ENCODE measurements at regions of chr1 and their contacts with region 1.

Region 1: DNA sequence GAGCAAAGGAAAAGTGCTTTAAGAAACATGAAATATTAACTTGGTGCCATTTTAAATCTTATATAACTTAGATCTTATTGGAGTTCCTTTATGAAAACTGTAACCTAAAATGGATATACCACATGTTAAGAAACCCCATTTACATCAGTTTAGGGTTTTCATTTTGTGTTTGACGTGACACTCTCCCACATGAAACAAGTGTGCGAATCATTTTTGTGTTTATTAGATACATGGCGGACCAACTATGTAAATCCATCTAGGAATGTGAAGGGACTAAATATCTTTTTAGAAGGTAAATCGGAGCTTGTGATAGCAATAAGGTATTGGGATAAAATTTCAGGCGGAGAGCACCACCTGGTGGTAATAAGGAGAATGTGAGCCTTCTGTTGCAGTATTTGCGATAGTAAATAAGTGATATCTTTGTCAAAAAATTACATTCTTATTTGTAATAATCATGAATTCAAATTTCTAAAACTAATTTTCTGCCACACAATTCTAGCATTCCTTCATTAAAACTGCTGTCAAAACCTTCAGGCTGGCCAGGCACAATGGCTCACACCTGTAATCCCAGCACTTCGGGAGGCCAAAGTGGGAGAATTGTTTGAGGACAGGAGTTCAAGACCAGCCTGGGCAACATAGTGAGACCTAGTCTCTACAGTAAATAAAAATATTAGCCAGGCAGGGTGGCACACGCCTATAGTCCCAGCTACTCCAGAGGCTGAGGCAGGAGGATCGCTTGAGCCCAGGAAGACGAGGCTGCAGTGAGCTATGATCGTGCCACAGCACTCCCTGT is 31.3 kb downstream of the SMAP2 start:
- DNase-seq: no peak
- ATAC-seq: peak; percentile 62

Region 2: DNA sequence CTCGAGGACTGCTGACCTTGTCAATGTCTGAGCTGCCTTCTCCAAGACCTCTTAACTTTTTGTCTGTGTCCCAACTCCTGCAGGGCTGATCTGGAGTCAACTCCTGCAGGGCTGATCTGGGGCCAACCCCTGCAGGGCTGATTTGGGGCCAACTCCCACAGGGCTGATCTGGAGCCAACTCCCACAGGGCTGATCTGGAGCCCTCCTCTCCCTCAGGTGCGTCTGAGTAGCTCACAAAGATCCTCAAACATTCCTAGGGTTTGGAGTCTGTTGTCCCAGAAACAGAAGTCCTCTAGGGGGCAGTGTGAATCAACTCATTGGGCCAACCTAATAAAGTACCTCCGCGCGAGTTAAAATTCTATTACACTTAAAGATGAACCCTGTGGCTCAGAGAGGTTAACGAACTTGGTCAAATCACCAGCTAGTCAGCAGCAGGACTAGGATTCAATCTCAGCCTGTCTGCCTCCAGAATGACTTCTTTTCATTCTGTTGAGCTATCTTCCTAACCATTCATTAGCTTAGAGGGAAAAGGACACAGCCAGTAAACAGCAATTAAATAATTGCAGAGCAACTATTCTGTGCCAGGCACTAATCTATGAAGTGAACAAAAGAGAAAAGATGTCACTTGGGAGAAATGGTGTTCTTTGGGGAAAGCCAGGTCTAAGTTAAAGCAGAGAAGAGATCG is 260.8 kb before region 1 on chr1:
- intact Hi-C with region 1: loop called (anchors 10 kb)
- DNase-seq: no peak
- ATAC-seq: peak; percentile 78

Region 3: DNA sequence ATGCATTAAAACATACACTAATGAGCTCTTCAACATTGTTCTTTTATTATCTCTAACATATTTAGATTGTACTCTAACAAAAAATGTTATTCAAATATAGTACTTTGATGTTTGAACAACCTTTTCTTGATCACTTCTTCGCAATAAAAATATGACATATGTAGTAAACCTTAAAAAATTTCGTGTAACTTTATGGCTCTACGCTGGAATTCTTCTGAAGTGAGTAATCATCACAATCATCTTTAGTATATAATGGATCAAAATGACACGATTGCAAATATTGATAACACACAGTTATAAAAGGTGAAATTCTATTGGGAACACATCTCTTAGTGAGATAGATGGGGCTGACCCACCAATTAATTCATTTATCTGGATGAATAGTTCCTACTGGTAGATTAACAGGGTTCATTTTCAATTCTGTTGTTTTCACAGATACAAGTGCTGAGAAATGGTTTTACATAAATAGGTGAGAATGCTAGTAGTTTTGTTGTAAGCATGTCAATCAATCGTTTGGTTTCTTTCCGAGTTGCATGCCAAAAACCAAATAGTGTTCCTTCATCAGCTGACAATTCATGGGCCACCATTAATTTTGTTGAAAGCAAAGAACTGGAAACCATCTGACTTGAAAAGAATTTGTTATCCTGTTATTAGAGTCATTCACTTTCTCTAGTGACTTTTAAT is 148.3 kb before region 1 on chr1:
- intact Hi-C with region 1: no loop called
- DNase-seq: no peak
- ATAC-seq: no peak

Region 4: GRCh38 chr1:40344597-40344996 is 60.3 kb before region 1 on chr1:
- intact Hi-C with region 1: loop called (anchors 10 kb)
- DNase-seq: peak; percentile 58
- ATAC-seq: peak; percentile 65

Measured in left ventricle myocardium superior (tissue), 1 donor.